Activated naive CD4-positive, alpha-beta T cell treated with anti-CD3 and anti-CD28 coated beads for 36 hours (primary cell): ENCODE measurements at regions of chr10 and their contacts with region 1.

Region 1: DNA sequence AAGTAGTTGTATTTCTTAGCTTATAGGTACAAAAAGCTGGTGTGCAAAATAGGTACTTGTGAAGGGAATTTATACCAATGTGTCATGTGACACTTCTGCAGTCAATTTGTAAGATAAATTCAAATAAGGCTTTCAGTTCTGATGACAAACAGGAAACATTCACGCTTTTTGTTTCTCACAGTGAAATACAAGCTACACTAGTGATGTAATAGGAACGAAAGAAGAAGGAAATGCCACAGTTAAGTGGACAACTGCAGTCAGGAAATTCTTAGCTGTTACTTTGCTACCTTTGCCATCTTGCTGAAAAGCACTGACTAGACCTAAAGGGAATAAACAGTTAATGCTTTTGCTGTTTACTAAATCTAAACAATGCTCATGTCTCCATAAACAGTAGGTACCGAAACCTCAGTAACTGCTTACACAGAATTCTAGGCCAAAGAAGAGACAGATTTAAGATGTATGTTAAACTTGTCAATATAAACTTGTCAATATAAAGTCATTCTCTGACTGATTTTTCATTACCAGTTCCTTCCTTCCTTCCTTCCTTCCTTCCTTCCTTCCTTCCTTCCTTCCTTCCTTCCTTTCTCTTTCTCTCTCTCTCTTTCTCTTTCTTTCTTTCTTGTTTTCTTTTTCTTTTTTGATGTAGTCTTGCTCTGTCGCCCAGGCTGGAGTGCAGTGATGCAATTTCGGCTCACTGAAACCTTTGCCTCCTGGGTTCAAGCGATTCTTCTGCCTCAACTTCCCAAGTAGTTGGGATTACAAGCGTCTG is 10.1 kb downstream of the OTUD1 start:
- DNase-seq: no peak
- H3K4me3 Mint-ChIP-seq: peak overlapping the region; percentile 35
- H3K27ac Mint-ChIP-seq: peak overlapping the region; percentile 92
- H3K4me1 Mint-ChIP-seq: peaks cover 42% of the 10 kb centered on the region
- H3K27me3 Mint-ChIP-seq: no peaks in the 10 kb centered on the region

Region 2: DNA sequence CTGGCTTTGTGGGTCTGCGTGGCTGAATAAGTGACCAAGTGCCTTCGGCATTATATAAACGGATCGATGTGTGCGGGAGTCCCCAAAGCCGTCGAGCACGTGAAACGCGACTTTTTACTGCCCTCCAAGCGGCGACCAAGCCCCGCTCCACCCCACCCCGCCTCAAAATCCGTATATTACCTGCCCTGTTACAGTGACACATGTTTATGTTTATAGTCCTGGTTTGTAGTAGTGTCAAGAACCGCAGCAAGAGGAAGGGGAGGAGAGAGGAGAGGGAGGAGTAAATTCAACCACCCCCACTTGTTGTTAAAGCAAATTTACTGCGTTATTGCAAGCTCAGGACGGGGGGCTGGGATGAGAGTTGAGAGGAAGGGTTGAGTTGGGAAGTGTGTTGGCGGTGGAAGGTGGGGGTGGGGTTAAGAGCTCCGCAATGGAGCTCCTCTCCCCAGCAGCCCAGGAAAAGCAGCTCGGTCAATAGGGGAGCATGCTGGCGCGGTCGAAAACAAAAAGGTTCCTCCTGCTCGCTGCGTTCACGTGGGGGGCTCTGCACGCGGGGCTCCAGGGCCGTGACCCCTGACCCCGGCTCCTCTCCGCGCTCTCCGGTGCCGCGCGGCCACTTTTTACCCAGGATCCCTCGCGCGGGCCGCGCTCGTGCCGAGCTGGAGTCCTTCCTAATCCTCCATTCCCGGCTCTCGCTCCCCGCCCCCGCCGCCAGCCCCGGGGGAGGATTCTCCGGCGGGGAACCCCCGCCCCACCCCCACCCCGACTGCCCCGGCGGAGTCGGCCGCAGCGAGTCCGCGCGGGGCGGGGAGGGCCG is 1923.4 kb before region 1 on chr10 and contains the start of gene SKIDA1:
- CTCF ChIA-PET with region 1: no interaction called
- intact Hi-C with region 1: loop called (anchors 5 kb)
- DNase-seq: peak; percentile 72
- H3K4me3 Mint-ChIP-seq: peak within 1 kb of the TSS; percentile 94
- H3K27ac Mint-ChIP-seq: peak within 1 kb of the TSS; percentile 92
- H3K4me1 Mint-ChIP-seq: peaks cover 22% of the 10 kb centered on the region
- H3K27me3 Mint-ChIP-seq: peaks cover 28% of the 10 kb centered on the region
- total RNA-seq, gene SKIDA1: 0.10 TPM in 1 of 2 experiments, not detected in the other

Region 3: GRCh38 chr10:23270531-23270930 is 178.5 kb before region 1 on chr10:
- CTCF ChIA-PET with region 1: no interaction called
- intact Hi-C with region 1: no loop called
- DNase-seq: no peak
- H3K4me3 Mint-ChIP-seq: no peak overlapping the region
- H3K27ac Mint-ChIP-seq: no peak overlapping the region
- H3K4me1 Mint-ChIP-seq: no peaks in the 10 kb centered on the region
- H3K27me3 Mint-ChIP-seq: peaks cover 5% of the 10 kb centered on the region

Region 4: DNA sequence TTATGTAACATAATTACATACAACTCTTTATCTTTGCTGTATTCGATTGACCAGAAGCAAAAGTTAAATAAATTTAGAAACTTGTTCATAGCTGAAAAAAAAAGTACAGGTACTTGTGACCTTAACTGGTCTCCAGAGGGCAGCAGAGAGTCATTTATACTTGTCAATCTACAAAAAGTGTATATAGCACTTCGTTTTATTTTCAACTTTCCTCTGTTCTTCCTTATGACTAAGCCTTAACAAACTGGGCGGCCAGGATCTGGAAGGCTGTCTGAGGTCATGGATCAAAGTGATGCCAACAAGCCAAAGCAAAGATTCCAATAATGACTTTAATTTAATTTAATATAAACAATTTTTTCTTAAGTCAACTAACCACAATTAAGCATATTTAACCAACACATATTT is 134.1 kb before region 1 on chr10:
- CTCF ChIA-PET with region 1: interaction called, 10 read pairs
- intact Hi-C with region 1: no loop called
- DNase-seq: peak; percentile 71
- H3K4me3 Mint-ChIP-seq: no peak overlapping the region
- H3K27ac Mint-ChIP-seq: no peak overlapping the region
- H3K4me1 Mint-ChIP-seq: peaks cover 4% of the 10 kb centered on the region
- H3K27me3 Mint-ChIP-seq: no peaks in the 10 kb centered on the region

Region 5: GRCh38 chr10:23362879-23363792 is 85.8 kb before region 1 on chr10:
- CTCF ChIA-PET with region 1: interaction called, 3 read pairs
- intact Hi-C with region 1: loop called (anchors 1 kb)
- DNase-seq: peak; percentile 72
- H3K4me3 Mint-ChIP-seq: peak overlapping the region; percentile 68
- H3K27ac Mint-ChIP-seq: peak overlapping the region; percentile 95
- H3K4me1 Mint-ChIP-seq: peaks cover 58% of the 10 kb centered on the region
- H3K27me3 Mint-ChIP-seq: no peaks in the 10 kb centered on the region

Region 6: GRCh38 chr10:23368816-23369640 is 80.0 kb before region 1 on chr10:
- CTCF ChIA-PET with region 1: no interaction called
- intact Hi-C with region 1: loop called (anchors 1 kb)
- DNase-seq: peak; percentile 24
- H3K4me3 Mint-ChIP-seq: peak overlapping the region; percentile 14
- H3K27ac Mint-ChIP-seq: peak overlapping the region; percentile 73
- H3K4me1 Mint-ChIP-seq: peaks cover 63% of the 10 kb centered on the region
- H3K27me3 Mint-ChIP-seq: no peaks in the 10 kb centered on the region

Region 7: GRCh38 chr10:23535381-23535780 is 86.4 kb after region 1 on chr10:
- CTCF ChIA-PET with region 1: interaction called, 4 read pairs
- intact Hi-C with region 1: loop called (anchors 2 kb)
- DNase-seq: no peak
- H3K4me3 Mint-ChIP-seq: peak overlapping the region; percentile 14
- H3K27ac Mint-ChIP-seq: peak overlapping the region; percentile 72
- H3K4me1 Mint-ChIP-seq: peaks cover 77% of the 10 kb centered on the region
- H3K27me3 Mint-ChIP-seq: no peaks in the 10 kb centered on the region

Region 8: DNA sequence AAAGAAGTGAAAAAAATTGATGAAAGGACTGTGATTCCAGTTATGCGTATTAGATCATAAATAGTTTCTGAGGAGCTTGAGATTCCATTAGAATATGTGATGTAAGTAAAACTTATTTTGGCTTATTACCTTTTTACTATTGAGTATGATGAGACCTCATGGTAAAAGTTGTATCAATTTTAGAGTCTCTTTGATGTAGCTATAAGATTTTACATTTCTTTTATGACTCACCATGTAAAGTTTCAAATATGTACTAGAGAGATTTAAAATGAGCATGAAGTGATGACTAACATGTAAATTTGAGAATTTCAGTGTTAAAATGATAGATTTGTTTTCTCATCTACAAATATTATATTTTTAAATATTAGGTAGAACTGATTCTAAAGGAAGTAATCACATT is 266.4 kb after region 1 on chr10:
- CTCF ChIA-PET with region 1: no interaction called
- intact Hi-C with region 1: loop called (anchors 1 kb)
- DNase-seq: no peak
- H3K4me3 Mint-ChIP-seq: no peak overlapping the region
- H3K27ac Mint-ChIP-seq: no peak overlapping the region
- H3K4me1 Mint-ChIP-seq: peaks cover 12% of the 10 kb centered on the region
- H3K27me3 Mint-ChIP-seq: peaks cover 28% of the 10 kb centered on the region